ENCODE measurements at regions of chr3 and their contacts with region 1.

Region 1: DNA sequence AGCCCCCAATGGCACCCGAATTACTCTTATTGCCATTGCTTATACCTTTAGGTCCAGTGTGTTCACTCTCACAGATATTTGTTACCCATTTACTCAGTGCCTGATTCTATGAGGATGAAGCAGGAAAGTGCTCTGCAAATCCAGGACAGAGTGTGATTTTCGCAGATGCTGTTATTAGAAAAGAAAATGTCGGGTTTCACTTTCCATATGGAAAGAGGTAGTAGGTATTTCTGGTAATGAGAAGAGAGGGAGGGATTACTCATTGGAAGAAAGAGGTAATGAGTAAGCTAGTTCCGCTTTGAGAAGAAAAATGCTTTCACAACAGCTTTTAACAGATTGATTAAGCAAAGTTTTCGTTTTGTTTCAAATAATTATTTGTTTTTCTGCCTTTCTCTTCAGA is 336.3 kb upstream of the CFAP20DC start:
- DNase-seq: peak; percentile 24
- H3K4me3 Mint-ChIP-seq: no peak overlapping the region
- H3K27ac Mint-ChIP-seq: peak overlapping the region; percentile 63
- H3K4me1 Mint-ChIP-seq: peaks cover 70% of the 10 kb centered on the region
- H3K27me3 Mint-ChIP-seq: no peaks in the 10 kb centered on the region

Region 2: GRCh38 chr3:58874795-58875194 is 511.4 kb before region 1 on chr3:
- CTCF ChIA-PET with region 1: no interaction called
- intact Hi-C with region 1: loop called (anchors 10 kb)
- DNase-seq: peak; percentile 46
- H3K4me3 Mint-ChIP-seq: no peak overlapping the region
- H3K27ac Mint-ChIP-seq: peak overlapping the region; percentile 77
- H3K4me1 Mint-ChIP-seq: peaks cover 15% of the 10 kb centered on the region
- H3K27me3 Mint-ChIP-seq: peaks cover 16% of the 10 kb centered on the region

Region 3: GRCh38 chr3:59444294-59444671 is 58.1 kb after region 1 on chr3:
- CTCF ChIA-PET with region 1: no interaction called
- intact Hi-C with region 1: loop called (anchors 1 kb)
- DNase-seq: peak; percentile 66
- H3K4me3 Mint-ChIP-seq: peak overlapping the region; percentile 54
- H3K27ac Mint-ChIP-seq: peak overlapping the region; percentile 94
- H3K4me1 Mint-ChIP-seq: peaks cover 53% of the 10 kb centered on the region
- H3K27me3 Mint-ChIP-seq: no peaks in the 10 kb centered on the region

Region 4: GRCh38 chr3:59526999-59527398 is 140.8 kb after region 1 on chr3:
- CTCF ChIA-PET with region 1: no interaction called
- intact Hi-C with region 1: loop called (anchors 1 kb)
- DNase-seq: no peak
- H3K4me3 Mint-ChIP-seq: no peak overlapping the region
- H3K27ac Mint-ChIP-seq: no peak overlapping the region
- H3K4me1 Mint-ChIP-seq: peaks cover 15% of the 10 kb centered on the region
- H3K27me3 Mint-ChIP-seq: peaks cover 2% of the 10 kb centered on the region

Region 5: DNA sequence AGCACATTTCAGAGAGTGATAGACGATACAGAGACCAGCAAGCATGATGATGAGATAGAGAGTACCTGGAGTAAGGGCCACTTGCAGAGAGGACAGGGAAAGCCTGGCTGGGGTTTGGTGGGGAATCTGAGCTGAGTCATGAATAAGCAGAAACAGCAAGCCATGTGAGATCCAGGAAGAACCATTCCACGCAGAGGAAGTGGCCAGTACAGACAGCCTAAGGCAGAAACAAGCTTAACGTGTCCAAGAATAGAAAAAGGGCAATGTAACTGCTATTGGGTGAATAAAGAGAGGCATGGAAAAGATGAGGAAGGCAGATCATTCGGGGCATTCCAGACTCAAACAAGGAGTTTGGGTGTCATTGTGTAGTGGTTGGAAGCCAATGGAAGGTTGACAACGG is 479.9 kb after region 1 on chr3:
- CTCF ChIA-PET with region 1: no interaction called
- intact Hi-C with region 1: loop called (anchors 5 kb)
- DNase-seq: no peak
- H3K4me3 Mint-ChIP-seq: no peak overlapping the region
- H3K27ac Mint-ChIP-seq: no peak overlapping the region
- H3K4me1 Mint-ChIP-seq: peaks cover 59% of the 10 kb centered on the region
- H3K27me3 Mint-ChIP-seq: no peaks in the 10 kb centered on the region

Region 6: GRCh38 chr3:60053526-60054265 is 667.5 kb after region 1 on chr3:
- CTCF ChIA-PET with region 1: no interaction called
- intact Hi-C with region 1: loop called (anchors 5 kb)
- DNase-seq: peak; percentile 80
- H3K4me3 Mint-ChIP-seq: peak overlapping the region; percentile 32
- H3K27ac Mint-ChIP-seq: peak overlapping the region; percentile 92
- H3K4me1 Mint-ChIP-seq: peaks cover 86% of the 10 kb centered on the region
- H3K27me3 Mint-ChIP-seq: no peaks in the 10 kb centered on the region

Measured in activated naive CD4-positive, alpha-beta T cell treated with anti-CD3 and anti-CD28 coated beads for 36 hours (primary cell).